CD8-positive, alpha-beta memory T cell (primary cell): ENCODE measurements at regions of chr19 and their contacts with region 1.

Region 1: DNA sequence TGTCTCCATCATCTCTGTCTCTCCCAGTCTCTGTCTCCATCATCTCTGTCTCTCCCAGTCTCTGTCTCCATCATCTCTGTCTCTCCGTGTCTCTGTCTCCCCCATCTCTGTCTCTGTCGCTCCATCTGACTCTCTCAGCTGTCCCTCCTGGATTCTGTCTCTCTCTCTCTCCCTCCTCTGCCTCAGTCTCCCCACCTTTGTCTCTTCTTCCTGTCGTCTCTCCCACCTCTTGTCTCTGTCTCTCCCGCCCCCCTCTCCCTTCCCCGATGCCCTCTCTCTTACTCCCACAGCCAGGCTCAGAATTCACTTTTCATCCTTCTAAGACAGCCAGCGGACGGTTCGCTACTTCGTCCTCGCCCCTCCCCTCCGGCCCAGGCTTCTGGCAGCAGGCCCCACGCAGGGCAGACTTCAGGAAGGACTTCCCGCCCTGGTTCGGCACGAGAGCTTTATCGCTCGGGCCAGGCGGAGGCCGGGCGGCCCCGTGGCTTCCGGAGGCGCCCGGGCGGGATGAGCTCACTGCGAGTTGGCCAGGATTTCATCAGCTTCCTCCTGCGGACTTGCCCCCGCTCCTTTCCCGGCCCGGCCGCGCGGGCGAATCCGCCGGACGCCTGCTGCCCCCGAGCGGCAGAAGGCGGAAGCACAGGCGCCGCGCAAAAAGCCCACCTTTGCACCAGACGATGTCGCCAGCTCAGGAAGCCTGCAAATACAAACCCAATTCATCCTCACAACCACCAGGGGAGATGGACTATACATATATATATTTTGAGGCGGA is 12.4 kb upstream of the CCDC9 start:
- DNase-seq: peak; percentile 83 to 91 (median 88)
- H3K4me3 ChIP-seq: peak overlapping the region; percentile 64
- H3K4me3 Mint-ChIP-seq: peak overlapping the region; percentile 57 to 89 (median 77)
- H3K27ac ChIP-seq: peak overlapping the region; percentile 63
- H3K27ac Mint-ChIP-seq: peak overlapping the region in 7 of 8 donors; percentile 44 to 93 (median 92)
- H3K4me1 ChIP-seq: peaks cover 43% of the 10 kb centered on the region
- H3K4me1 Mint-ChIP-seq: peaks cover 9 to 29% (median 29%) of the 10 kb centered on the region in 3 donors
- H3K27me3 ChIP-seq: no peaks in the 10 kb centered on the region
- H3K27me3 Mint-ChIP-seq: peaks cover 0 to 1% of the 10 kb centered on the region in 2 donors

Region 2: DNA sequence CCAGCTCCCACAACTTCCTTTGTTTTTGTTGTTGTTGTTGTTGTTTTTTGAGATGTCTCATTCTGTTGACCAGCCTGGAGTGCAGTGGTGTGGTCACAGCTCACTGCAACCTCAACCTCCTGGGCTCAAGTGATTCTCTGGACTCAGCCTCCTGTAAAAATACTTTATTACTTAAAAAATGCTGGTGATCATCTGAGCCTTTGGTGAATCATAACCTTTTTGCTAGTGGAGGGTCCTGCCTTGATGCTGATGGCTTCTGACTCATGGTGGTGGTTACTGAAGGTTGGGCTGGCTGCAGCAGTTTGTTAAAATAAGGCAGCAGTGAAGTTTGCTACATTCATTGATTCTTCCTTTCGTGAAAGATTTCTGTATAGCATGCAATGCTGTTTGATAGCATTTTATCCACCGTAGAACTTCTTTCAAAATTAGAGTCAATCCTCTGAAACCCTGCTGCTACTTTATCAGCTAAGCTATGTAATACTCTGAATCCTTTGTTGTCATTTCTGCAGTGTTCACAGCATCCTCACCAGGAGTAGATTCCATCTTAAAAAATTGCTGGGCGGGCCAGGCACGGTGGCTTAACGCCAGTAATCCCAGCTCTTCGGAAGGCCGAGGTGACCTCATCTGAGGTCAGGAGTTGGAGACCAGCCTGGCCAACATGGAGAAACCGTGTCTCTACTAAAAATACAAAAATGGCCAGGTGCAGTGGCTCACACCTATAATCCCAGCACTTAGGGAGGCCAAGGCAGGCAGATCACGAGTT is 365.2 kb before region 1 on chr19:
- CTCF ChIA-PET with region 1: no interaction called
- POLR2A ChIA-PET with region 1: no interaction called
- DNase-seq: no peak
- H3K4me3 ChIP-seq: no peak overlapping the region
- H3K4me3 Mint-ChIP-seq: no peak overlapping the region
- H3K27ac ChIP-seq: no peak overlapping the region
- H3K27ac Mint-ChIP-seq: peak overlapping the region in 1 of 8 donors; percentile 54
- H3K4me1 ChIP-seq: no peaks in the 10 kb centered on the region
- H3K4me1 Mint-ChIP-seq: peaks cover 16 to 41% (median 33%) of the 10 kb centered on the region in 3 donors
- H3K27me3 ChIP-seq: no peaks in the 10 kb centered on the region
- H3K27me3 Mint-ChIP-seq: peaks cover 0 to 2% of the 10 kb centered on the region in 2 donors

Region 3: DNA sequence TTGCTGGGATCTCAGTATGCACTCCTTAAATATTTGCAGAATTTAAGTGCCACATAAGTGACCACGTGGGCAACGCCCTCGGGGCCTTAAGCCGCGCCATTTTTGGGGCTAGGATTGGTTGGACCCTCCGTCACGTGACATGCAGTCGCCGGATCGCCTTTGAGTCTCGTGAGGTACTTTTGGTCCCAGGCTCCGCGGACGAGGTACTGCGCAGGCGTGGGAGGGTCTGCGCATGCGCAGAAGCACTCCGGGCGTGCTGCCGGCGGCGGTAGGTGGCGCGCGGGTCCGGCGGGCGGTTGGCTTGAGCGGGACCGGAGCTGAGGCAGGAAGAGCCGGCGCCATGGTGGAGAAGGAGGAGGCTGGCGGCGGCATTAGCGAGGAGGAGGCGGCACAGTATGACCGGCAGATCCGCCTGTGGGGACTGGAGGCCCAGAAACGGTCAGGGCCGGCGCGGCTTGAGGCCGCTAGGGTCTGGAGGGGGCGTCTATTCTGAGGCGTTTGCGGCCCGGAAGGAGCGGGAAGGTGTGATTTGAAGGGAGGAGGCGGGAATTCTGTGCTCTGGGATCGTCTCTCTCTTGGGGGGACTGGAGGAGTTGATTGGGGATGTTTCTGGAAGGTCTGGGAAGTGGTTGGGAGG is 113.3 kb before region 1 on chr19 and contains the start of gene SAE1:
- CTCF ChIA-PET with region 1: interaction called, 26 read pairs
- POLR2A ChIA-PET with region 1: interaction called, 15 read pairs
- DNase-seq: peak; percentile 85 to 94 (median 89)
- H3K4me3 ChIP-seq: peak within 1 kb of the TSS; percentile 97
- H3K4me3 Mint-ChIP-seq: peak within 1 kb of the TSS; percentile 96 to 100 (median 98)
- H3K27ac ChIP-seq: peak within 1 kb of the TSS; percentile 90
- H3K27ac Mint-ChIP-seq: peak within 1 kb of the TSS; percentile 74 to 99 (median 96)
- H3K4me1 ChIP-seq: peaks cover 33% of the 10 kb centered on the region
- H3K4me1 Mint-ChIP-seq: peaks cover 39 to 57% (median 52%) of the 10 kb centered on the region in 3 donors
- H3K27me3 ChIP-seq: no peaks in the 10 kb centered on the region
- H3K27me3 Mint-ChIP-seq: peaks cover 0 to 8% of the 10 kb centered on the region in 2 donors
- total RNA-seq, gene SAE1: 167 to 172 TPM

Region 4: DNA sequence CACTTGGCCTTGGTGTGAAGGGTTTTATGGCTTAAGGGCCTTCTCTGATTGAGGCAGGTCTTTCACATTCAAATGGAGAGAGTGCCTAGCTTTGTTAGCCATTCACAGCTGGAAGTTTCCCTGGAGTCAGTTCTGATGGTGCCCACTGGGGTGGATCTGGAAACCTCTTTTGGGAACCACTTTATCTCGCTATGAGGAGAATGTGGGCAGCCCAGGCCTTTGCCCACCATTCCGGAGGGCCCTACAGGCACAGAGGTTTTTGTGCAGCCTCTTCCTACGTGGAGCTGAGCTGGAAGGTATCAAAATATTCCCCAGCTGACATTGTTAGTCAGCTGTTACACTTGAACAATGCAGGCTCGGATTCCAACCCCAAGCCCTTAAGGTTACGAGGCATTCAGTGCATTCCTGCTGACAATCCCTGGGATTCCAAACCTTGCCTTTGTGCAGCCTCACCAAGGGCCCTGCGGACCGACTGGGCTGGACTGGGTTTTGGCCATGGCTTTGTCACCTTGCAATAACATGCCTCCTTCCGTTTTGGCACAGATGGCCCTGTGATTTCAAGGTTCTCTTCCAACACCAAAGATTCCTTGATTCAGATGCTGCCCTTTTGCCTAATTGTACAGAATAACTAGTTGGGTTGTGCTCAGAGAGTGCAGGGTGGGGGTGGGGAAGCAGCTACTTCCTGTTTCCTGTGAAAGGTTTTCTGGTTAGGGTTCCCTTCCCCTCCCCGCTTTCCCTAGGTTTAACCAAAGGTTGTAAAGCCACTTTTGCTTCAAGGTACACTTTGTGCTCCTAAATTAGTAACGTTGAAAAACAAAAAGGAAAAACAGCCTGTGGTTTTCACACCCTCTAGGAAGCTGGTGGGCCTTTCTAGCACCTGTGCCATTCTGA is 86.3 kb before region 1 on chr19:
- CTCF ChIA-PET with region 1: interaction called, 342 read pairs
- POLR2A ChIA-PET with region 1: interaction called, 29 read pairs
- DNase-seq: peak in 3 of 5 donors; percentile 21 to 59 (median 45)
- H3K4me3 ChIP-seq: peak overlapping the region; percentile 48
- H3K4me3 Mint-ChIP-seq: peak overlapping the region; percentile 62 to 84 (median 80)
- H3K27ac ChIP-seq: peak overlapping the region; percentile 2
- H3K27ac Mint-ChIP-seq: peak overlapping the region; percentile 73 to 98 (median 93)
- H3K4me1 ChIP-seq: peaks cover 69% of the 10 kb centered on the region
- H3K4me1 Mint-ChIP-seq: peaks cover 50 to 78% (median 68%) of the 10 kb centered on the region in 3 donors
- H3K27me3 ChIP-seq: no peaks in the 10 kb centered on the region
- H3K27me3 Mint-ChIP-seq: no peaks in the 10 kb centered on the region

Region 5: GRCh38 chr19:47190167-47190727 is 53.7 kb before region 1 on chr19:
- CTCF ChIA-PET with region 1: interaction called, 34 read pairs
- POLR2A ChIA-PET with region 1: interaction called, 15 read pairs
- DNase-seq: peak in 3 of 5 donors; percentile 39 to 67 (median 67)
- H3K4me3 ChIP-seq: no peak overlapping the region
- H3K4me3 Mint-ChIP-seq: peak overlapping the region; percentile 2 to 55 (median 33)
- H3K27ac ChIP-seq: no peak overlapping the region
- H3K27ac Mint-ChIP-seq: peak overlapping the region; percentile 48 to 91 (median 70)
- H3K4me1 ChIP-seq: peaks cover 72% of the 10 kb centered on the region
- H3K4me1 Mint-ChIP-seq: peaks cover 41 to 69% (median 55%) of the 10 kb centered on the region in 3 donors
- H3K27me3 ChIP-seq: no peaks in the 10 kb centered on the region
- H3K27me3 Mint-ChIP-seq: no peaks in the 10 kb centered on the region

Region 6: DNA sequence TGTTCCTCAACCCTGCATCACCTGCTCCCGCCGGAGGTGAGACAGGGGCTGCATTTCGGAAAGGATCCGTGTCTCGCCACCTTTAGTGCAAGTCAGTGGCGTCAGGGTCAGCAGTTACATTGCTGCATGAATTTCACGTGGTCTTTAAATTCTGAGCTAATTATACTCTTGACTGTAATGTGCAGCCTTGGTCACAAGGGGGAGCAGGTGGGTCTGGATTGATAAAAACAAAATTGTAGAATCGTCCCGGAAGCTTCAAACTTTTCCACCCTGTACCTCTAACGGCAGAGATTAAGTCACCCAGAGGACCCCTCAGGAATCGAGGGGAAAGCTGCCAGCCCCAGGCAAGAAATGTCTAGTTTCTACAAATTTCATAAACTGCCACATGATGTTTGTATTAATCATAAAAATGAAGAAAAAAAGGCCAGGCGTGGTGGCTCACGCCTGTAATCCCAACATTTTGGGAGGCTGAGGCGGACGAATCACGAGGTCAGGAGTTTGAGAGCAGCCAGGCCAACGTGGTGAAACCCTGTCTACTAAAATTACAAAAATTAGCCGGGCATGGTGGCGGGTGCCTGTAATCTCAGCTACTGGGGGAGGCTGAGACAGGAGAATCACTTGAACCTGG is 33.2 kb before region 1 on chr19:
- CTCF ChIA-PET with region 1: interaction called, 334 read pairs
- POLR2A ChIA-PET with region 1: interaction called, 40 read pairs
- DNase-seq: peak; percentile 66 to 83 (median 73)
- H3K4me3 ChIP-seq: no peak overlapping the region
- H3K4me3 Mint-ChIP-seq: no peak overlapping the region
- H3K27ac ChIP-seq: peak overlapping the region; percentile 53
- H3K27ac Mint-ChIP-seq: peak overlapping the region in 7 of 8 donors; percentile 20 to 82 (median 55)
- H3K4me1 ChIP-seq: peaks cover 11% of the 10 kb centered on the region
- H3K4me1 Mint-ChIP-seq: peaks cover 6 to 9% (median 6%) of the 10 kb centered on the region in 3 donors
- H3K27me3 ChIP-seq: no peaks in the 10 kb centered on the region
- H3K27me3 Mint-ChIP-seq: no peaks in the 10 kb centered on the region

Region 7: GRCh38 chr19:47231215-47231984 is 12.6 kb before region 1 on chr19:
- CTCF ChIA-PET with region 1: interaction called, 75 read pairs
- POLR2A ChIA-PET with region 1: interaction called, 77 read pairs
- DNase-seq: peak; percentile 84 to 96 (median 94)
- H3K4me3 ChIP-seq: peak overlapping the region; percentile 78
- H3K4me3 Mint-ChIP-seq: peak overlapping the region; percentile 81 to 88 (median 85)
- H3K27ac ChIP-seq: peak overlapping the region; percentile 84
- H3K27ac Mint-ChIP-seq: peak overlapping the region; percentile 85 to 97 (median 92)
- H3K4me1 ChIP-seq: peaks cover 46% of the 10 kb centered on the region
- H3K4me1 Mint-ChIP-seq: peaks cover 18 to 32% (median 26%) of the 10 kb centered on the region in 3 donors
- H3K27me3 ChIP-seq: no peaks in the 10 kb centered on the region
- H3K27me3 Mint-ChIP-seq: no peaks in the 10 kb centered on the region

Region 8: DNA sequence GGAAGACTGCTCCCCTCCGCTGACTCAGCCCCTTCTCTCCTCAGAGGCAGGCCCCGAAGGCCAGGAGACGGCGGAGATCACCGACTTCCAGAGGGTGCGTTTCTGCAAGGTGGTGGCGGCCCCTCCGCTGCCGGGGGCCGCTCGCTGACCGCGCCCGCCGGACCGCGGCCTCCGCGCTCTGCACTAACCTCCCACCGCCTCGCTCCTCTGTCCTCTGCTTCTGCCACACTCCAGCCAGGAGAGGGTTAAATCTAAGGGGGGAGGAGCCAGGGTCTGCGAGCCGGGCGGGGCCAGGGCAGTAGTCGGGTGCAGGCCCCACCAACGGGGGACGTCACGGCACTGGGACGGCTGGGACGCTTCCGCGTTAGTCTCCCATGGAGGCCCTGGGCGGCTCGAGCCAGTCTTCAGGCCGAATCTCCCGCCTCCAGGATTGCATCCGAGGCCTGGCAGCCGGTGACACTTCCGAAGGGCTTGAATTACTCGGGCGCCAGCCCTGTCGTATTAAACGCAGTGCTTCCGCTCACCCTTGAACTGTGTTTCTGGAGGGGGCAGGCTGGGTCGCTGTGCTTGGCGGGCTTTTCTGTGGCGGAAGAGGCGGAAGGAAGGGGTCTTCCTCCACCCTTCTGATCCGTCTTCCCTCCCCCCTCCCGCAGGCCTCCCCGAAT is 29.5 kb after region 1 on chr19:
- CTCF ChIA-PET with region 1: interaction called, 14 read pairs
- POLR2A ChIA-PET with region 1: interaction called, 12 read pairs
- DNase-seq: peak; percentile 82 to 92 (median 86)
- H3K4me3 ChIP-seq: peak overlapping the region; percentile 93
- H3K4me3 Mint-ChIP-seq: peak overlapping the region; percentile 96 to 99 (median 97)
- H3K27ac ChIP-seq: peak overlapping the region; percentile 97
- H3K27ac Mint-ChIP-seq: peak overlapping the region; percentile 97 to 100 (median 98)
- H3K4me1 ChIP-seq: peaks cover 15% of the 10 kb centered on the region
- H3K4me1 Mint-ChIP-seq: peaks cover 18 to 28% (median 24%) of the 10 kb centered on the region in 3 donors
- H3K27me3 ChIP-seq: no peaks in the 10 kb centered on the region
- H3K27me3 Mint-ChIP-seq: no peaks in the 10 kb centered on the region

Region 9: GRCh38 chr19:47296036-47296435 is 52.1 kb after region 1 on chr19:
- CTCF ChIA-PET with region 1: no interaction called
- POLR2A ChIA-PET with region 1: no interaction called
- DNase-seq: peak; percentile 61 to 83 (median 71)
- H3K4me3 ChIP-seq: no peak overlapping the region
- H3K4me3 Mint-ChIP-seq: no peak overlapping the region
- H3K27ac ChIP-seq: no peak overlapping the region
- H3K27ac Mint-ChIP-seq: peak overlapping the region in 2 of 8 donors; percentile 48 to 72
- H3K4me1 ChIP-seq: peaks cover 3% of the 10 kb centered on the region
- H3K4me1 Mint-ChIP-seq: peaks cover 7 to 14% (median 10%) of the 10 kb centered on the region in 3 donors
- H3K27me3 ChIP-seq: no peaks in the 10 kb centered on the region
- H3K27me3 Mint-ChIP-seq: no peaks in the 10 kb centered on the region